CD4-positive, alpha-beta T cell (primary cell): ENCODE measurements at regions of chr20 and their contacts with region 1.

Region 1: GRCh38 chr20:3767427-3768341 is at the start of gene ADISSP:
- DNase-seq: peak; percentile 89 to 98 (median 95)
- ATAC-seq: peak; percentile 82
- H3K4me3 ChIP-seq: peak within 1 kb of the TSS; percentile 87
- H3K4me3 Mint-ChIP-seq: peak within 1 kb of the TSS; percentile 90
- H3K27ac ChIP-seq: peak within 1 kb of the TSS; percentile 96 to 99
- H3K27ac Mint-ChIP-seq: peak within 1 kb of the TSS; percentile 86
- H3K4me1 ChIP-seq: peaks cover 37% of the 10 kb centered on the region
- H3K4me1 Mint-ChIP-seq: peaks cover 26% of the 10 kb centered on the region
- H3K27me3 ChIP-seq: no peaks in the 10 kb centered on the region
- H3K27me3 Mint-ChIP-seq: no peaks in the 10 kb centered on the region
- CTCF ChIP-seq: no peak
- total RNA-seq, gene ADISSP: 11.2 to 11.6 TPM

Region 2: GRCh38 chr20:3753098-3753980 is 14.3 kb before region 1 on chr20:
- CTCF ChIA-PET with region 1: interaction called, 25 read pairs
- POLR2A ChIA-PET with region 1: interaction called, 17 read pairs
- intact Hi-C with region 1: loop called (anchors 1 kb)
- DNase-seq: peak; percentile 45 to 83 (median 56)
- ATAC-seq: peak; percentile 64
- H3K4me3 ChIP-seq: no peak overlapping the region
- H3K4me3 Mint-ChIP-seq: peak overlapping the region; percentile 92
- H3K27ac ChIP-seq: no peak overlapping the region
- H3K27ac Mint-ChIP-seq: peak overlapping the region; percentile 70
- H3K4me1 ChIP-seq: peaks cover 13% of the 10 kb centered on the region
- H3K4me1 Mint-ChIP-seq: peaks cover 14% of the 10 kb centered on the region
- H3K27me3 ChIP-seq: peaks cover 0 to 7% of the 10 kb centered on the region in 2 experiments
- H3K27me3 Mint-ChIP-seq: no peaks in the 10 kb centered on the region
- CTCF ChIP-seq: peak; percentile 60

Region 3: GRCh38 chr20:3786665-3787323 is 19.1 kb after region 1 on chr20 and contains the start of gene CENPB:
- CTCF ChIA-PET with region 1: interaction called, 15 read pairs
- POLR2A ChIA-PET with region 1: interaction called, 30 read pairs
- intact Hi-C with region 1: loop called in 1 of 2 experiments (anchors 2 kb)
- DNase-seq: peak; percentile 70 to 95 (median 90)
- ATAC-seq: peak; percentile 83
- H3K4me3 ChIP-seq: peak within 1 kb of the TSS; percentile 63
- H3K4me3 Mint-ChIP-seq: peak within 1 kb of the TSS; percentile 85
- H3K27ac ChIP-seq: peak within 1 kb of the TSS; percentile 66 to 70
- H3K27ac Mint-ChIP-seq: peak within 1 kb of the TSS; percentile 73
- H3K4me1 ChIP-seq: peaks cover 32% of the 10 kb centered on the region
- H3K4me1 Mint-ChIP-seq: peaks cover 40% of the 10 kb centered on the region
- H3K27me3 ChIP-seq: no peaks in the 10 kb centered on the region
- H3K27me3 Mint-ChIP-seq: no peaks in the 10 kb centered on the region
- CTCF ChIP-seq: peak; percentile 80
- total RNA-seq, gene CENPB: 25.1 to 25.3 TPM

Region 4: GRCh38 chr20:3811467-3812258 is 44.0 kb after region 1 on chr20:
- CTCF ChIA-PET with region 1: interaction called, 5 read pairs
- POLR2A ChIA-PET with region 1: interaction called, 38 read pairs
- intact Hi-C with region 1: loop called in 1 of 2 experiments (anchors 5 kb)
- DNase-seq: peak; percentile 80 to 98 (median 96)
- ATAC-seq: peak; percentile 91
- H3K4me3 ChIP-seq: peak overlapping the region; percentile 57
- H3K4me3 Mint-ChIP-seq: peak overlapping the region; percentile 77
- H3K27ac ChIP-seq: peak overlapping the region; percentile 82 to 97
- H3K27ac Mint-ChIP-seq: peak overlapping the region; percentile 98
- H3K4me1 ChIP-seq: peaks cover 90% of the 10 kb centered on the region
- H3K4me1 Mint-ChIP-seq: peaks cover 81% of the 10 kb centered on the region
- H3K27me3 ChIP-seq: no peaks in the 10 kb centered on the region
- H3K27me3 Mint-ChIP-seq: no peaks in the 10 kb centered on the region
- CTCF ChIP-seq: no peak

Region 5: DNA sequence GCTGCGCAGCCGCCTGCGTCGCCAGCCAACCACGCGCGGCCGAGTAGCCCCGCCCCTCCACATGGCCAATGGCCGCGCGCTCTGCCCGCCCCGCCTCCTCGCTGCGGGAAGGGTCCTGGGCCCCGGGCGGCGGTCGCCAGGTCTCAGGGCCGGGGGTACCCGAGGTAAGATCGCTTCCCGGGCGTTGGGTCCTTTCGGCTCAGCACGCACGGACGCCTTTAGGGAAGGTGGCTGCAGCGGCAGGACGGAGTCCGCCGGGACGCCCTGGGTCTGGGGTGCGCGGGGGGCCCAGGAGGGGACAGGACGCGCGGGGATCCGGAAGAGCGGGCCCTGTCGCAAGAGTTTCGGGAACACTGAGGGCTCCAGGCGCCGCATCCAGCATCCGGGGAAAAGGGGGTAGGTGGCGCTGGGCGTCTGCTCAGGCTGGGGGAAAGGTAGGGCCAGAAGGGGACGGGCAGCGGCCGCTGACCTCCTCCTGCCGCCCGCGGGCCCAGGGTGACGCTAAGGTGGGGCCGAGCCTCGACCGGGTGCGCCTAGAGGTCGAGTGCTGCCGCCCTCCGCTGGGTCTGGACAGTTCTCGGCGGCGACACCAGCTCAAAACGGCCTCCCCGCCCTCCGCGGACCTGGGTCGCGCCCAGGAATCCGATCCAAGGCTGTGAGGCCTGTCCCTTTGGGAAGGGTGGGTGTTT is 79.2 kb after region 1 on chr20 and contains the start of gene MAVS:
- CTCF ChIA-PET with region 1: interaction called, 3 read pairs
- POLR2A ChIA-PET with region 1: no interaction called
- intact Hi-C with region 1: loop called in 1 of 2 experiments (anchors 5 kb)
- DNase-seq: peak; percentile 66 to 93 (median 84)
- ATAC-seq: peak; percentile 99
- H3K4me3 ChIP-seq: peak within 1 kb of the TSS; percentile 98
- H3K4me3 Mint-ChIP-seq: peak within 1 kb of the TSS; percentile 95
- H3K27ac ChIP-seq: peak within 1 kb of the TSS; percentile 74 to 75
- H3K27ac Mint-ChIP-seq: peak within 1 kb of the TSS; percentile 92
- H3K4me1 ChIP-seq: peaks cover 27% of the 10 kb centered on the region
- H3K4me1 Mint-ChIP-seq: peaks cover 26% of the 10 kb centered on the region
- H3K27me3 ChIP-seq: no peaks in the 10 kb centered on the region
- H3K27me3 Mint-ChIP-seq: no peaks in the 10 kb centered on the region
- CTCF ChIP-seq: no peak
- total RNA-seq, gene MAVS: 13.6 to 14.7 TPM

Region 6: DNA sequence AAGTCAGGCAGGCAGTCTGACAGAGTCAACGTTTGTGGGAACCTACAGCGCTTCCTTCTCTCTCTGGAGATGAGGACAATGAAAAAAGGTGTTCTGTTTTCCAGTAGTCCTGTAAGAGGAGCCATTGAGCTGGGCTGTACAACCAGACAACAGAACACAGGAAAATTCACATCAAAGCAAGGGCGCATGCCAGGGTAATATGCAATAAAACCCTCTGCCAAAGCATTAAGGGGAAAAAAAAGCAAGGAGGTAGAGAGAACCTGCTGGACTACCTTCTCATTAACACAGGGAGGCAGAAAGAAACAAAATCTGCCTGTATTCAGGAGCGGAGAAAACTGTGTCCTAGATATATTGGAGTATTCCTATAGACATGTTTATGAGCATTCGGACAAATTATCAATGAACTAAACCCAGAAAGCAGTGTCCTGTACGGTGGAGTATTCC is 246.4 kb after region 1 on chr20:
- CTCF ChIA-PET with region 1: no interaction called
- POLR2A ChIA-PET with region 1: no interaction called
- intact Hi-C with region 1: loop called in 1 of 2 experiments (anchors 5 kb)
- DNase-seq: peak in 6 of 14 experiments; percentile 23 to 77 (median 56)
- ATAC-seq: peak; percentile 33
- H3K4me3 ChIP-seq: peak overlapping the region; percentile 70
- H3K4me3 Mint-ChIP-seq: peak overlapping the region; percentile 90
- H3K27ac ChIP-seq: peak overlapping the region in 1 of 2 donors; percentile 4
- H3K27ac Mint-ChIP-seq: peak overlapping the region; percentile 79
- H3K4me1 ChIP-seq: peaks cover 28% of the 10 kb centered on the region
- H3K4me1 Mint-ChIP-seq: peaks cover 37% of the 10 kb centered on the region
- H3K27me3 ChIP-seq: no peaks in the 10 kb centered on the region
- H3K27me3 Mint-ChIP-seq: no peaks in the 10 kb centered on the region
- CTCF ChIP-seq: peak; percentile 71